ENCODE measurements at regions of chr4 and their contacts with region 1.

Region 1: DNA sequence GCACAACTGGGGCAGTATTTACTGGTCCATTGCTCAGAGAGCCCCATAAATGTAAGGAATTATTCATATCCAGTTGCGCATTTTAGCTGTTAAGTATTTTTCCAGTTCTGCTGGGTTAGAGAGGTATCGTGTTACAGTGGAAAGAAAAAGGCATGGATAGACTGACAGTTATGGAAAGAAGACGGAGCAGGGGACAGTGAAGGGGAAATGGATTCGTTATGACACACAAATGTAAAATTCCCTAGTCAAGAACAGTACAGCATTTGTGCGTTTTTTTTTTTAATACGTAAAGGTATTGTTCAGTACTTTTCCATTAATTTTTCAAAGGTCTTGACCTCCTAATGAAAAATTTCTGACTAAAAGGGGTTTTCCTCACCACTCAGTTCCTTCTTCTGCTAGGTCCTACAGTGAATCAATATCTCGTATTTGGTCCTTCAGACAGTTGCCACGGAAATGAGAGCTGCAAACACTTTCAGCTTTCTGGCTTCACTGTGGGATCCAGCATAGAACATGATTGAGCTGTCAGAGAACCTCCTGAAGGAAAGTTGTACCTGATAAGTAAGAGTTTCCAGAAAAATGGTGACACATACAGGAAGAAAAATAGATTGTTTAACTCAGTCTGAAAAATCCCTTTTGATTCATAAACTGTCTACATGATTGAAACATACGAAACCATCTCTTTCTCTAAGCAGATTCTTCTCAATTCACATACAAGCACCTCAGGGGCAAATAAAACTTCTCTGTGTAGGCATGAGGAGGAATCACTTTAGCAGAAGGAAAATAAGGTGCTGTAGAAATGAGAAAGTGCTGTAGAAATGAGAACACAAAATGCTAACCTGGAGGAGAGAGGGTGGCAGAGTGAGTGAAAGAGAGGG is 21.8 kb upstream of the BBS12 start:
- DNase-seq: peak; percentile 31
- H3K4me3 Mint-ChIP-seq: peak overlapping the region; percentile 67
- H3K27ac Mint-ChIP-seq: peak overlapping the region; percentile 97
- H3K4me1 Mint-ChIP-seq: peaks cover 83% of the 10 kb centered on the region
- H3K27me3 Mint-ChIP-seq: peaks cover 2% of the 10 kb centered on the region

Region 2: GRCh38 chr4:121923306-121923705 is 787.4 kb before region 1 on chr4:
- intact Hi-C with region 1: no loop called
- DNase-seq: no peak
- H3K4me3 Mint-ChIP-seq: no peak overlapping the region
- H3K27ac Mint-ChIP-seq: no peak overlapping the region
- H3K4me1 Mint-ChIP-seq: no peaks in the 10 kb centered on the region
- H3K27me3 Mint-ChIP-seq: peaks cover 3% of the 10 kb centered on the region

Region 3: GRCh38 chr4:121964958-121965357 is 745.7 kb before region 1 on chr4:
- intact Hi-C with region 1: no loop called
- DNase-seq: no peak
- H3K4me3 Mint-ChIP-seq: no peak overlapping the region
- H3K27ac Mint-ChIP-seq: no peak overlapping the region
- H3K4me1 Mint-ChIP-seq: no peaks in the 10 kb centered on the region
- H3K27me3 Mint-ChIP-seq: peaks cover 21% of the 10 kb centered on the region

Region 4: GRCh38 chr4:122065915-122066314 is 644.8 kb before region 1 on chr4:
- intact Hi-C with region 1: no loop called
- DNase-seq: no peak
- H3K4me3 Mint-ChIP-seq: no peak overlapping the region
- H3K27ac Mint-ChIP-seq: no peak overlapping the region
- H3K4me1 Mint-ChIP-seq: no peaks in the 10 kb centered on the region
- H3K27me3 Mint-ChIP-seq: peaks cover 9% of the 10 kb centered on the region

Region 5: GRCh38 chr4:122508083-122508482 is 202.6 kb before region 1 on chr4:
- intact Hi-C with region 1: loop called (anchors 1 kb)
- DNase-seq: no peak
- H3K4me3 Mint-ChIP-seq: peak overlapping the region; percentile 71
- H3K27ac Mint-ChIP-seq: peak overlapping the region; percentile 89
- H3K4me1 Mint-ChIP-seq: peaks cover 69% of the 10 kb centered on the region
- H3K27me3 Mint-ChIP-seq: no peaks in the 10 kb centered on the region

Region 6: DNA sequence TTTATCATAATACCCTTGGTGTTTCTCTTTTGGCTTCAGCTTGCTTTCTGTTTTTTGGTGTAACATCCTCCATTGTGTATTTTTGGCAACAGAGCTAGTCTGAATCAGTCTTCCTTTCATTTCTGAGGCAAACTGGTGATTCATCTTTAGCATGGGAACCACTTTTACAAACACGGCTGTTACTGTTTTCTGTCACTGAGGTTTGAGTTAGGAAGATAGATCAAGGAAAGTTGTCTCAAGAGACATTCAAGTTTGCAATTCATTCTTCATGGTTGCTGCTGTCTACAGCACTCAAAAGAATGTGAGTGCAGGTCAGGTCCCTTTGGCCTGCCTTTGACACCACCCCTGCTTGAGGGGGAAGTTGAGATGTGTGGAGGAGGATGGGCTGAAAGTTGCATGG is 126.2 kb before region 1 on chr4:
- intact Hi-C with region 1: loop called (anchors 1 kb)
- DNase-seq: peak; percentile 38
- H3K4me3 Mint-ChIP-seq: peak overlapping the region; percentile 62
- H3K27ac Mint-ChIP-seq: peak overlapping the region; percentile 94
- H3K4me1 Mint-ChIP-seq: peaks cover 70% of the 10 kb centered on the region
- H3K27me3 Mint-ChIP-seq: peaks cover 3% of the 10 kb centered on the region

Region 7: GRCh38 chr4:122666527-122667245 is 44.0 kb before region 1 on chr4:
- intact Hi-C with region 1: loop called (anchors 1 kb)
- DNase-seq: no peak
- H3K4me3 Mint-ChIP-seq: peak overlapping the region; percentile 69
- H3K27ac Mint-ChIP-seq: peak overlapping the region; percentile 74
- H3K4me1 Mint-ChIP-seq: peaks cover 88% of the 10 kb centered on the region
- H3K27me3 Mint-ChIP-seq: no peaks in the 10 kb centered on the region

Region 8: GRCh38 chr4:122700178-122700725 is 10.4 kb before region 1 on chr4:
- intact Hi-C with region 1: loop called (anchors 1 kb)
- DNase-seq: no peak
- H3K4me3 Mint-ChIP-seq: peak overlapping the region; percentile 81
- H3K27ac Mint-ChIP-seq: peak overlapping the region; percentile 95
- H3K4me1 Mint-ChIP-seq: peaks cover 70% of the 10 kb centered on the region
- H3K27me3 Mint-ChIP-seq: peaks cover 2% of the 10 kb centered on the region

Region 9: GRCh38 chr4:122732329-122733026 is 21.8 kb after region 1 on chr4 and contains the start of gene BBS12:
- intact Hi-C with region 1: no loop called
- DNase-seq: peak; percentile 98
- H3K4me3 Mint-ChIP-seq: peak within 1 kb of the TSS; percentile 94
- H3K27ac Mint-ChIP-seq: peak within 1 kb of the TSS; percentile 95
- H3K4me1 Mint-ChIP-seq: peaks cover 37% of the 10 kb centered on the region
- H3K27me3 Mint-ChIP-seq: no peaks in the 10 kb centered on the region
- total RNA-seq, gene BBS12: 4.4 and 6.2 TPM in 2 replicates

Region 10: GRCh38 chr4:122827879-122828601 is 117.4 kb after region 1 on chr4:
- intact Hi-C with region 1: loop called (anchors 5 kb)
- DNase-seq: peak; percentile 40
- H3K4me3 Mint-ChIP-seq: peak overlapping the region; percentile 78
- H3K27ac Mint-ChIP-seq: peak overlapping the region; percentile 64
- H3K4me1 Mint-ChIP-seq: peaks cover 34% of the 10 kb centered on the region
- H3K27me3 Mint-ChIP-seq: peaks cover 39% of the 10 kb centered on the region

Measured in activated T-helper 1 cell treated with anti-CD3 and anti-CD28 coated beads, Interleukin-12 subunit alpha, Interleukin-12 subunit beta, Interleukin-2, Interleukin-4 antibody, amounts not matched to agents 30 ng/mL and 10 ng/mL and 1 ng/mL, durations not matched to agents 14 hours and 24 hours and 36 hours (primary cell).